Posterior cingulate gyrus (tissue), 11 donors: ENCODE measurements at regions of chr1 and their contacts with region 1.

Region 1: GRCh38 chr1:92960395-92961130 is 699 bp downstream of the DIPK1A start:
- DNase-seq: peak; percentile 43 to 95 (median 72)

Region 2: DNA sequence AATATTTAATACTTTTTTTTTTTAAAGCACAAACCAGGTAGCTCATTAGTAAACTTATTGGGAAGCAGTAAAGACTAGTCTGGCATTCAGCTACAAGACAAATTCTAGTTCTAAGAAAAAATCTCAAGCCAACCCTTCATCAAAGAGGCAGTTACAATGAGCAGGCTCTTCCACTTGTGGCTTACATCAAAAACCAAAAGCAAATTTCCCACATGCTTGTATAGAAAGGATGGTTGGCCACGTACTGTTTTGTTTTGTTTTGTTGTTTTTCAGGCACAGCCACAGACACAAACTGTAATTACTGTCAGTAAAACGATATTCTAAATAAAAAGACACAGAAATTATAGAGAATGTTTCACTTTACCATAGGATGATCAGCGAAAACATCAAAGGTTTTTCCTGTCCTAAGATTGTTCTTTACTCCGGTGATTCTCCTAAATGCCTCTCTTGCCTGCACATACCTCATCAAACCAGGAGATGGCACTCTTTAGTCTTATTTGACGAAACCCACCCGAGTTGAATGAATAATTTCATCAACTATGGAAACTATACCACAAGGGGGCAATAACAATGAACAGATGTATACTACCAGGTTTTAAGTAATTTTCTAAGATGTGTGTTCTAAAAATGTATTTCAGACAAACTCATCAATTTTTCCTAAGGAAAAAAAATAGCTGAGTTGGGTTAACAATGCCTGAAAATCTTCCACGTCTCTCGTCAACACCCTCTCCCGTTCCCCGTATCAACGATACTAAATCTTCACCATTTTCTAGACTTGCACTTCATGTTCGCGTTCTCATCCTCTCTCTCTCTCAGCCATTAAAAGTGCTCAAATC is 101.8 kb before region 1 on chr1:
- intact Hi-C with region 1: loop called (anchors 1 kb)
- DNase-seq: peak in 1 of 10 donors; percentile 52

Region 3: GRCh38 chr1:92944901-92945747 is 15.4 kb before region 1 on chr1:
- intact Hi-C with region 1: loop called (anchors 2 kb)
- DNase-seq: no peak

Region 4: DNA sequence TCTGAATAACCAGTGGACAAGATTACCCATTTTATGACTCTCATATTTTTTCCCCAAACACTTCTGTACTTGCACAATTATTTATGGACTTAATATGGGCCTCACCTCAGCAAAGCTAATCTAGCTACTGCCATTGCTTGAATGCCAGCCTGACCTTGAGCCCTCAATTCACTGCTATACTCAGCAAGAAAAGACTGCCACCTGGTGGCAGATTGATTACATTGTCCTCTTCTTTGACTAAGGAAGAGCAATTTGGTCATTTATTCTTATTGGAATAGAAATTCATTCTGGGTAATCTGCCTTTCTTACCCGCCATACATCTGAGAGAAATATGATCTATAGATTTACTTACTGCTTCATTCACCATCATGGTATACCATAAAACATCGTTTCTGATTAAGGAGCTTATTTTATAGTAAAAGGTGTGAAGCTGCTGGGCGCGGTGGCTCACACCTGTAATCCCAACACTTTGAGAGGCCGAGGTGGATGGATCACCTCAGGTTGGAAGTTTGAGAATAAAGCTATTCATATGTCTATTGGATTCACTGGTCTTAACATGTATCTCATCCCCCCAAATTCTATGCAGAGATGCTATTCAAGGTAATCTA is 33.6 kb after region 1 on chr1:
- intact Hi-C with region 1: loop called (anchors 2 kb)
- DNase-seq: peak in 5 of 10 donors; percentile 37 to 74 (median 56)